ENCODE measurements at regions of chr10 and their contacts with region 1.

Region 1: GRCh38 chr10:48981310-48981907 is 41.8 kb upstream of the LRRC18 start:
- DNase-seq: no peak
- ATAC-seq: peak; percentile 88
- H3K4me3 ChIP-seq: no peak overlapping the region
- H3K27ac ChIP-seq: no peak overlapping the region
- H3K4me1 ChIP-seq: no peaks in the 10 kb centered on the region
- H3K27me3 ChIP-seq: no peaks in the 10 kb centered on the region
- CTCF ChIP-seq: peak; percentile 70 to 81 (median 80)
- EP300 ChIP-seq: no peak
- POLR2A ChIP-seq: no peak
- RAD21 ChIP-seq: peak; percentile 67

Region 2: DNA sequence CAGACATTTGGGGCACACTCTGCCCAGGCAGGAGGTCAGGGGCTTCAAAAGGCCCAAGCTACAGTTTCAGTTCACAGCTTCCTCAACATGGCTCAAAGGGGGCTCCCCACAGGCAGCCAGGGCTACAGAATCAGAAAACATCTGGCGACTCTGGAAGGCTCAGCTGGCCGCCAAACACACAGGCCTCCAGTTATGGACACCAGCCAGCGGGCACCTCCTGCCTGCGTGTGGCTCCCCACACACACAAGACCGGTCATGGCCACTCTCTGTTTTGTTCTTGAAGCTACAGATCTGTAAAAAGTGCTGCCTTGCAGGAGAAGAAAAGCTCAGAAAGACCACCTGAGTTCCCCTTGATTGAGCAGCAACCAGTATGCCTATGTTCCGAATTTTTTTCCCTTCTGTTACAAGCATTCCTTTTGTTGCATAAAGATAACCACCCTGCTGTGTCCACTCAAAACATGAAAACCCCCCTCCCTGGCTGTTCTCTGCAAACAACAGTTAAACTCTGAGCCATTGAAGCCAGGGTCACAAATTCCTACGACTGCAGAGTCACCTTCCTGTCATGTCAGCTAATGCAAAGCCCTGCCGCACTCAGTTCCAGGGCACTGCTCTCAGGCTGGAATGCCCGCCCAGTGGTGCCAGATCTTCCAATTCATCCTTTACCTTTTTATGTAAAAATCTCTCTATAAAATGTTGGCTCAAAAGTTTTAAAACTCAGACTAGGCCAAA is 100.3 kb after region 1 on chr10:
- CTCF ChIA-PET with region 1: no interaction called
- POLR2A ChIA-PET with region 1: no interaction called
- RAD21 ChIA-PET with region 1: no interaction called
- SMC1A ChIA-PET with region 1: no interaction called
- in situ Hi-C with region 1: no loop called
- intact Hi-C with region 1: no loop called
- DNase-seq: no peak
- ATAC-seq: no peak
- H3K4me3 ChIP-seq: no peak overlapping the region
- H3K27ac ChIP-seq: no peak overlapping the region
- H3K4me1 ChIP-seq: peaks cover 6% of the 10 kb centered on the region
- H3K27me3 ChIP-seq: no peaks in the 10 kb centered on the region; a peak in 1 of 4 replicates
- CTCF ChIP-seq: no peak
- EP300 ChIP-seq: no peak
- POLR2A ChIP-seq: no peak
- RAD21 ChIP-seq: no peak

Region 3: DNA sequence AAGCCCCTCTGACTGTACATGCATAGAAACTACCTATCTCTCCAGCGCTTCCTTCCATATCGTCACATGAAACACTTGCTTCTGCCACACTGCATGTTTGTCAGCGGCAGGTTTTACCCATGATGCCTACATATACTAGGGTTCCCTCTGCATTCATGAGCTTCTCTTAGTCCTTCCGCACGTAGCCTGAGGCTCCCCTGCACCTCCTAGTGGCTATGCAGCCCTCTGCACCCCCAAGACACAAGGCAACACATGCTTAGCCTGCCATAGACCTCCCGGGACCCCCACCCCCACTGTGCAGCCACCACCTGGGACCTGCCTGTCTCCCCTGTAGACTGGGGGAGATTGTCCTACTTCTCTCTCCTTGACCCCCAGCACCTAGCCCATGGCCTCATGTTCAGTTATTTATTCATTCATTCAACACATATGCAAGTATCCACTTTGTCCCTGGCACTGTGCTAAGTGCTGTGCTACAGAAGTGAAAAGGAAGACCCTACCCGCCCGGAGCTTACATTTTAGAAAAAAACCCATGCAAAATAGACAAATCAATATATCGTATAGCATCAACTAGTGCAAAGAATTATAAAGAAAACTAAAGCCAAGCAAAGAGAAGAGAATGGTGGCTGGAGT is 183.3 kb after region 1 on chr10:
- CTCF ChIA-PET with region 1: interaction called, 4 read pairs
- POLR2A ChIA-PET with region 1: no interaction called
- RAD21 ChIA-PET with region 1: no interaction called
- SMC1A ChIA-PET with region 1: interaction called, 3 read pairs
- in situ Hi-C with region 1: no loop called
- intact Hi-C with region 1: loop called (anchors 1 kb)
- DNase-seq: no peak
- ATAC-seq: peak; percentile 87
- H3K4me3 ChIP-seq: no peak overlapping the region
- H3K27ac ChIP-seq: no peak overlapping the region
- H3K4me1 ChIP-seq: no peaks in the 10 kb centered on the region
- H3K27me3 ChIP-seq: no peaks in the 10 kb centered on the region
- CTCF ChIP-seq: peak; percentile 51 to 75 (median 72)
- EP300 ChIP-seq: no peak
- POLR2A ChIP-seq: no peak
- RAD21 ChIP-seq: peak; percentile 73